ENCODE measurements at regions of chr9 and their contacts with region 1.

Region 1: GRCh38 chr9:135689011-135689410 is 10.3 kb downstream of the SOHLH1 start:
- DNase-seq: no peak
- H3K4me3 ChIP-seq: no peak overlapping the region
- H3K27ac ChIP-seq: no peak overlapping the region
- H3K4me1 ChIP-seq: no peaks in the 10 kb centered on the region
- H3K27me3 ChIP-seq: no peaks in the 10 kb centered on the region
- CTCF ChIP-seq: no peak
- POLR2A ChIP-seq: no peak

Region 2: DNA sequence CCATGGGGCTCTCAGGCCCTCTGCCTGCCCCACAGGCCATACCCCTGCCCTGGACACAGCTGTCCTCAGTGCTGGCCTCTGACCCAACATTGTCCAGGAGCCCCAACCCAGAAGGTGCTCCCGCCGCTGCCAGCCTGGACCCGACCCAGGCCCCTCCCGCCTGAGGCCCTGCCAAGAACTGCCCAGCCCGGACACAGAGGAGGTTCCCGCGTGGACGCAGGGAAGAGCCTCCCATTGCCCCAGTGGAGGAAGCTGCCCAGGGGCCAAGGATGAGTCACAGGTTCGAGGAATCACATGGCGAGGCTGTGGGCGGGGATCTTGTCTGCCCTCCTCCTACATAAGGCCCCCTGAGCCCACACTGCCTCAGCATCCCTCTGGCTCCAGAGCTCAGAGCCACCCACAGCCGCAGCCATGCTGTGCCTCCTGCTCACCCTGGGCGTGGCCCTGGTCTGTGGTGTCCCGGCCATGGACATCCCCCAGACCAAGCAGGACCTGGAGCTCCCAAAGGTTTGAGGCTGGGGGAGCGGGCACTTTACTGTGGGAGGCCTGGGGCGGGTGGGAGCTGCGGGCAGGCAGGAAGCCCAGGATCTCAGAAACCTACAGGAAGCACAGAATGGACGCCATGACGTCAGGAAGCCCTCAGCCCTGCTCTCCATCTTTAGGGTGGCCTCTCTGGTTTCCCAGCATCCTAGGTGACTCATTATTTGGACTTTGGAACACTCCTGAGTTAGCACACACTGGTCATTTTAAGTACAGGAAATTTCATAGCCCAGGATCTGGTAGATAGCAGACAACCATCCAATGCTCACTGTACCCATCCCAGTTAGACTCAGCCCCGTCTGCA is 127.4 kb before region 1 on chr9 and contains the start of gene PAEP:
- intact Hi-C with region 1: no loop called
- DNase-seq: no peak
- H3K4me3 ChIP-seq: no peak within 1 kb of the TSS
- H3K27ac ChIP-seq: no peak within 1 kb of the TSS
- H3K4me1 ChIP-seq: no peaks in the 10 kb centered on the region
- H3K27me3 ChIP-seq: no peaks in the 10 kb centered on the region
- CTCF ChIP-seq: no peak
- POLR2A ChIP-seq: no peak
- total RNA-seq, gene PAEP: 0.17 TPM in 1 of 9 donors, not detected in the others

Region 3: DNA sequence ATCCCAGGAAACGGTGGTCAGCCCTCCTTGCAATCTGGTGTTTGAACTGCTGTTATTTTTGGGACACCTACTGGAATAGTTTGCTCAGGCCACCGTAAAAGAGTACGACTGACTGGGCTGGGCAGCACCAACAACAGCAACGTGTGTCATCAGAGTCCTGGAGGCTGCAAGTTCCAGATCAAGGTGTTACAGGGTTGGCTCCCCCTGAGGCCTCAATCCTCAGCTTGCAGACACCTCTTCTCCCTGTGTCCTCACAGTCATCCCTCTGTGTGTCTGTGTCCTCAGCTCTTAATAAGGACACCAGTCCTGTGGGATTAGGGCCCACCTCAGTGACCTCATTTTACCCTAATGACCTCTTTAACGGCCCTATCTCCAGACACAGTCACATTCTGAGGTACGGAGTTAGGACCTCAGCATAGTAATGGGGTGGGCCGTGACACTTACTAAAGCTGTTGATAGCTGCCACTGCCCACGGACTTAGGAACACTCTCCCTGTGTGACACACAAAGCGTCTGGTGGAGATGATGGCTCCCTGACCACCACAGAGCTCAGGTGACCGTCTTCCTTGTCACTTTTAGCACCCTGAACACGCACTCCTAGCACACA is 66.5 kb before region 1 on chr9:
- intact Hi-C with region 1: loop called in 1 of 2 experiments (anchors 10 kb)
- DNase-seq: no peak
- H3K4me3 ChIP-seq: no peak overlapping the region
- H3K27ac ChIP-seq: no peak overlapping the region
- H3K4me1 ChIP-seq: no peaks in the 10 kb centered on the region
- H3K27me3 ChIP-seq: peaks cover 9% of the 10 kb centered on the region
- CTCF ChIP-seq: no peak
- POLR2A ChIP-seq: no peak